ENCODE measurements at regions of chr22 and their contacts with region 1.

Region 1: DNA sequence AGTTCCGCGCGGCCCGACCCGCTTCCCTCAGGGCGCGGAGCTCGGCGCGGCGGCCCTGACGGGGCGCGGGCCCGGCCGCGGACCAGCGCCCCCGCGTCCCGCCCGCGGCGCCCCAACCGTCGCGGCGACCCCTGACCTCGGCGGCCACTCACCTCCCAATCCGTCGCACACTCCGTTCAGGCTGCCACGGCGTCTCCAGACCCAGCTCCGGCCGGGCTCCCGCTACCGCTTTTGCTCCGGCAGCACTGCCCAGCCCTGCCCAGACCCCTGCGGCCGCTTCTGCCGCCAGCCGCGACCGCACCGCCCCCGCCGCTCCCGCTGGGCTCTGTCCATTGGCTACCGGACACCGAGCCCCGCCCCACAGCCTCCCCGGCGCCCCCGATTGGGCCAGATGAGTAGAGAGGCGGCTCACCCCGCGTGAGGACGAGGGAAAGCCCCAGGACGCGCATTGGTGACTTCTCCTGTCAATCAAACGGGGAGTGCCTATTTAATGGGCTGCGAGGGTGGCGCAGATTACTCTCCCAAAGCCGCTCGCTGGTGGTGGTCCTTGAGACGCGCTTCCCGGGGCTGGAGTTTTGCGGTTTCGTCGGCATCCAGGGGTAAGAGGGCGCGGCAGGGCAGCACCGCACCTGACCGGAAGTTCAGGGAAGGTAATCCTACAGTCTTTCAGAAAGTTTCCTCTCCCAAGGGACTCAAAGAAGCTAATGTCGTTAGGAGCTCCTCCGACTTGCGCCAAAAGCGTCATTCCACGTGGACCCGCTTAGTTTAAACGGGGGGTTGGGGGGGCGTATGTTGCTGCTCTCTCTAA is at the start of gene PACSIN2:
- DNase-seq: peak; percentile 96 to 100 (median 98)
- ATAC-seq: peak; percentile 97 to 98
- H3K4me3 Mint-ChIP-seq: peak within 1 kb of the TSS; percentile 94 to 99 (median 97)
- H3K27ac Mint-ChIP-seq: peak within 1 kb of the TSS; percentile 94 to 99 (median 97)
- H3K4me1 Mint-ChIP-seq: peaks cover 19 to 37% (median 31%) of the 10 kb centered on the region in 4 donors
- H3K27me3 Mint-ChIP-seq: no peaks in the 10 kb centered on the region
- polyA plus RNA-seq, gene PACSIN2: 21.9 to 27.8 (median 23.8) TPM

Region 2: DNA sequence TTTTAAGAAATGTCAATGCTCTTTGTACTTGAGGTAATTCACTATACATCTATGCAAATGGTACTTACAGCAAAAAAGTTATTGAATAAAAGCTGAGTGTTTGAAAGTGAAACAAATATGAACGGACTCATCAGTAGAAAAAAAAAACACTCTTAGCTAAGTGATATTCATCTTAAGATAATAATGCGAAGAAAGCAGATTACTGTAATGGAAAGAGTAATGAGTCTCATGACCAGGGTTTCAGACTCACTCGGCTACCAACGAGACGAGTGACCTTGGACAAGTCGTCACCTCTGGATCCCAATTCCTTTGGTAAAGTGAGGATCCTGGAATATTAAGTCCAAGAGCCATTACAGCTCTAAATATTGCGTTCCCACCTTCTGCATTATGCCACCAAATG is 57.1 kb before region 1 on chr22:
- POLR2A ChIA-PET with region 1: no interaction called
- DNase-seq: no peak
- ATAC-seq: no peak
- H3K4me3 Mint-ChIP-seq: no peak overlapping the region
- H3K27ac Mint-ChIP-seq: peak overlapping the region in 1 of 10 donors; percentile 81
- H3K4me1 Mint-ChIP-seq: peaks cover 46 to 62% (median 58%) of the 10 kb centered on the region in 4 donors
- H3K27me3 Mint-ChIP-seq: no peaks in the 10 kb centered on the region

Region 3: GRCh38 chr22:42978453-42979103 is 36.5 kb before region 1 on chr22:
- POLR2A ChIA-PET with region 1: no interaction called
- DNase-seq: no peak
- ATAC-seq: no peak
- H3K4me3 Mint-ChIP-seq: peak overlapping the region in 2 of 10 donors; percentile 2 to 8
- H3K27ac Mint-ChIP-seq: peak overlapping the region in 5 of 10 donors; percentile 6 to 76 (median 47)
- H3K4me1 Mint-ChIP-seq: peaks cover 23 to 49% (median 41%) of the 10 kb centered on the region in 4 donors
- H3K27me3 Mint-ChIP-seq: no peaks in the 10 kb centered on the region

Region 4: DNA sequence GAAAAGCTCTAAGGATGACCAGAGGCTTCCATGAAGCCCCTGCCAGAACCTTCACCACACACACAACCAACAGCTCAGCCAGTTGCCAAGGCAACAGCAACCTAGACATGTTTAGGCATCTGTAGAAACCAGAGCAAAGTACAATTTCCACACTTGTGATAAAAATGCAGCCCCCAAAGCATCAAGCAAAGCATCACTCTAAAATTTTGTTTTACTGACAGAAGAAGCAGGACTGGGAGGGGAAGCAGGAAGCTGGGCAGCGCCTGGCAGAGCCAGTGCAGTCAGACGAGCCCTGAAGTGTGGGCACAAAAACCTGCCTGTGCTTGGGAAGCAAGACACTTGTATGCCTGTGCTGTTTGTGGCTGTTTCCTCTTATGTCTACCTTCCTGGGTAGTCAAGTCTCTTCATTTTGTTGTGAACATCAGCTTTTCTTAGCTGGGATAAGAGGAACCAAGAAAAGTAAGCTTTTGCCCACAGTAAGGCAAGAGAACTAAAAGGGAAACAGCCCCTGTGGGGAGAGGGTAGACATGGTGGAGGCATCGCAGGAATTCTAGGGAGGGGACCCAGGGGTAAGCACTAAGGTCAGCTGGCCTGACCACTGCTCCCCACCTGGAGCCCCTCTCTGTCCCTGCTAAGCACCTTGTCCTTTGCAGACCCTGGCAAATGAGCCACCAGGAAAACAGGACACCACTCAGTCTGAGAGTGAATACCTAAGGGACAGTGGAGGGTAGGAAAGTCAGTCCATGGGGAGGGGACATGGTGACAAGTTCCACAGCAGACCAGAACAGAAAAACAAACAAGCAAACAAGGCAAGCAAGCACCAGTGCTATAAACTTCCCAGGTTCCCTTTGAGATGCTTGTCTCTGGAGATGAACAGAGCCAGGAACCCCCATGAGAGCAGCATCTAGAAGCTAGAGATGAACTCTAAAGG is 13.5 kb before region 1 on chr22:
- POLR2A ChIA-PET with region 1: interaction called, 15 read pairs
- DNase-seq: peak in 1 of 10 donors; percentile 21
- ATAC-seq: peak; percentile 58 to 69
- H3K4me3 Mint-ChIP-seq: peak overlapping the region in 8 of 10 donors; percentile 19 to 51 (median 30)
- H3K27ac Mint-ChIP-seq: peak overlapping the region in 9 of 10 donors; percentile 20 to 82 (median 75)
- H3K4me1 Mint-ChIP-seq: peaks cover 41 to 91% (median 90%) of the 10 kb centered on the region in 4 donors
- H3K27me3 Mint-ChIP-seq: no peaks in the 10 kb centered on the region

Region 5: DNA sequence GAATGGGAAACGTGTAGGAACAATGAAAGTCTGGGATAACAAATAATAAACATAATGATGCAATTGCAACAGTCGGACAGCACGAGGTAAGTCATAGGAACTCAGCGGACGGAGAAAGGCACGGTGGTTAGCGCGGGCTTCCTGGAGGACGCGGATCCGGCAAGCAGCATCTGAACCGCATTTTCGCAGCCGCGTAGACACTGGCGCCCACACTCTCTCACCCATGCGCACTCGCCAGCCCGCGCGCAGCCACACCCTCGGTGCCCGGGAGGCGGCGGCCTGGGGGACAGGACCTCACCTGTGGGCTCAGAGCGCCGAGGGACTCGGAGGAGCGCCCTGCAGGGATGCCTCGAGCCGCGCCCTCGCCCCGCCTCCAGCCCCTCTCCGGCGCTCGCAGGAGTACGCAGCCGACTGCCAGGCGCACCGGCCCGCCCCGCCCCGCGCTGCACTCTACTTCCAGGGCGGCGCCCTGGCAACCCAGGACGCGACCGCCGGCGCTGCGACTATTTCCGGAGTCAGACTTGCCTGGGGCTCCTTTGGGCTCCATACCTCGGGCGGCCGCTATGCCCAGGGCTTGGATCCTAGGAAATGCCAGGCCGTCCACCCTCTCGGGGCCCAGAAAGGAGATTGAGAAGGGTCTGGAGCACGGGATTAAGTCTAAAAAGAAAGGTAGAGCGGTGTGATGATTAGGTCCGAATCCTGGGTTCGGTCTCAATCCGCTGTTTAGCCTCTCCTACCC is 74.1 kb after region 1 on chr22 and contains the start of gene TTLL1:
- POLR2A ChIA-PET with region 1: no interaction called
- DNase-seq: peak; percentile 80 to 90 (median 84)
- ATAC-seq: peak; percentile 95 to 98
- H3K4me3 Mint-ChIP-seq: peak within 1 kb of the TSS; percentile 85 to 97 (median 92)
- H3K27ac Mint-ChIP-seq: peak within 1 kb of the TSS; percentile 25 to 95 (median 88)
- H3K4me1 Mint-ChIP-seq: peaks cover 5 to 31% (median 17%) of the 10 kb centered on the region in 4 donors
- H3K27me3 Mint-ChIP-seq: no peaks in the 10 kb centered on the region
- polyA plus RNA-seq, gene TTLL1: 12.7 to 14.5 (median 12.8) TPM

Region 6: DNA sequence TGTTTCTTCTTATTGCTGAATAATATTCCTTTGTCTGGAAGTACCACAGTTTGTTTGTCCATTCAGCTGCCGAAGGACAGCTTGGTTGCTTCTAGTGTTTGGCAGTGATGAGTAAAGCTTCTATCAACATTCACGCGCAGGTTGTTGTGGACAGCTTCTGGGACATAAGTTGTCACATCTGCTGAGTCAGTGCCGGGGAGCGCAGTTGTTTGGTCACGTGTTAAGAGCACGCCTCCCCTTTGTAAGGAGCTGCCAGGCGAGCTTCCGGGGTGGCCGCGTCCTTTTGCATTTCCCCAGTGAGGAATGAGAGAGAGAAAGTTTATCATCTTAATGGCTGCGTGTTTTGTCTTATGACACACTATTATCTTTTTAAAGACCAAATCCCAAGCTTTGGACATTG is 970.5 kb after region 1 on chr22:
- POLR2A ChIA-PET with region 1: no interaction called
- DNase-seq: no peak
- ATAC-seq: no peak
- H3K4me3 Mint-ChIP-seq: no peak overlapping the region
- H3K27ac Mint-ChIP-seq: peak overlapping the region in 1 of 10 donors; percentile 21
- H3K4me1 Mint-ChIP-seq: no peaks in the 10 kb centered on the region
- H3K27me3 Mint-ChIP-seq: no peaks in the 10 kb centered on the region

Measured in naive thymus-derived CD8-positive, alpha-beta T cell (primary cell).